ENCODE measurements at regions of chr12 and their contacts with region 1.

Region 1: DNA sequence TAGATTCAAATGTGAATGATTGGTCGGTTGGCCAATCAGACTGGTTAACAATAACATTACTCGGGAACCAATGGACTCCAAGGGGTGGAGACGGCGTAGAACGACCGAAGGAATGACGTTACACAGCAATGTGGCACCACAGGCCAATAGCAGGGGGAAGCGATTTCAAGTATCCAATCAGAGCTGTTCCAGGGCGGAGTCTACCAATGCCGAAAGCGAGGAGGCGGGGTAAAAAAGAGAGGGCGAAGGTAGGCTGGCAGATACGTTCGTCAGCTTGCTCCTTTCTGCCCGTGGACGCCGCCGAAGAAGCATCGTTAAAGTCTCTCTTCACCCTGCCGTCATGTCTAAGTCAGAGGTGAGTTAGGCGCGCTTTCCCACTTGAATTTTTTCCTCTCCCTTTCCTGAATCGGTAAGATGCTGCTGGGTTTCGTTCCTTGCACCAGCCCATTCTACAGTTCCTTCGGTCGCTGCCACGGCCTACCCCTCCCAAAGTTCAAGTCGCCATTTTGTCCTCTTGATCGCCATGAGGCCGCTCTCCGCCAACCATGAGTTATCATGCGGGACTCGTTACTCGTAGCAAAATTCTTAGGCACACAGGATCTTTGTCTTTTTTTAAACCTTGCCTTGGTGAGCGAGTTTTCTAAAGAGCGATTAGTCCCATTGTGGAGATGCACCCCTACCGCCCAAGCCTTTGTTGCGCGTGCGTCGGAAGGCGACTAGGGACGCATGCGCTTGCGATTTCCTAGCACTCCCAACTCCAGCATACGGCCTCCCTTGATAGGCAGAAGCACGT is at the start of gene HNRNPA1:
- DNase-seq: peak; percentile 98
- ATAC-seq: peak; percentile 89
- H3K4me3 Mint-ChIP-seq: no peak within 1 kb of the TSS
- H3K27ac Mint-ChIP-seq: no peak within 1 kb of the TSS
- H3K4me1 Mint-ChIP-seq: peaks cover 55% of the 10 kb centered on the region
- H3K27me3 Mint-ChIP-seq: no peaks in the 10 kb centered on the region
- total RNA-seq, gene HNRNPA1: 1,520 to 1,553 TPM

Region 2: GRCh38 chr12:54240971-54241588 is 39.6 kb before region 1 on chr12:
- CTCF ChIA-PET with region 1: no interaction called
- POLR2A ChIA-PET with region 1: interaction called, 14 read pairs
- DNase-seq: no peak
- ATAC-seq: no peak
- H3K4me3 Mint-ChIP-seq: no peak overlapping the region
- H3K27ac Mint-ChIP-seq: peak overlapping the region; percentile 54
- H3K4me1 Mint-ChIP-seq: peaks cover 17% of the 10 kb centered on the region
- H3K27me3 Mint-ChIP-seq: no peaks in the 10 kb centered on the region

Region 3: GRCh38 chr12:54259194-54260011 is 21.3 kb before region 1 on chr12:
- CTCF ChIA-PET with region 1: no interaction called
- POLR2A ChIA-PET with region 1: interaction called, 10 read pairs
- DNase-seq: peak; percentile 49
- ATAC-seq: peak; percentile 91
- H3K4me3 Mint-ChIP-seq: peak overlapping the region; percentile 28
- H3K27ac Mint-ChIP-seq: no peak overlapping the region
- H3K4me1 Mint-ChIP-seq: peaks cover 26% of the 10 kb centered on the region
- H3K27me3 Mint-ChIP-seq: no peaks in the 10 kb centered on the region

Region 4: DNA sequence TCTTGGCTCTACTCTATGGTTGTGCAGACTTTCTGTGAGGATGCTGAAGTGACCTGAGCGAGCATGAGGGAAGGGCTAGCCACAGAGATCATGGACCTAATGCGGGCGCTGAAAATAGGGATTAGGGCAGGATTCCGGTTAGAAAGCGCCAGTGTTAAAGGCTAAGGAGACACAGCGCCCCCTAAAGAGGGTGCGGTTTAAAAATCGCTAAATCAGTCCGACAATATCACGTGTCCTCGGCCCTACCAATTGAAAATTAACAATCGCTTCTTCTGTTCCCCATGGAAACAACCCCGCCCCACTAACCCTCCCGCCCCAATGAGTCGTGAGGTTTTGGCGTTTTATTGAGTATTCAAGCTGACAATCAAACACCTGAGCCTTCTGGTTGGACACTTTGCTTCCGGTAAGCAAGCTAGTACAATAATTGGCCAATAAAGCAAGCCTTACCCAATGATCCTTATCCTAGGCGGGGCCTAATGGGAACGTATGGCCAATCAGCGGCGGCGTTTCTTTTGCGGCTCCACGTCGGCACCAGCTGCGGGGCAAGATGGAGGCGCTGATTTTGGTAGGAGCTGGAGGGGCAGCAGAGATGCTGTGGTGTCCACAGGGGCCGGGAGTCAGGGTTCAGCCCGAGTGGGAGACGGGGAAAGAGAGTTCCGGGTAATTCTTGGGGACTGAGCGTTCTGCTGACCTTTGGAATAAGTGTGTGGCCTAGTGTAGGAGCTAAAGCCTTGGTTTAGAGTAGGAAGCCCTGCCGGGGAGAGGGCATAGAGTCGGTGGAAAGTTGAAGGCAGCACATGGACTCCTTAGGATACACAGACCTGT is 44.2 kb after region 1 on chr12 and contains the start of gene COPZ1:
- CTCF ChIA-PET with region 1: interaction called, 26 read pairs
- POLR2A ChIA-PET with region 1: interaction called, 24 read pairs
- DNase-seq: peak; percentile 98
- ATAC-seq: peak; percentile 99
- H3K4me3 Mint-ChIP-seq: peak within 1 kb of the TSS; percentile 97
- H3K27ac Mint-ChIP-seq: peak within 1 kb of the TSS; percentile 92
- H3K4me1 Mint-ChIP-seq: peaks cover 38% of the 10 kb centered on the region
- H3K27me3 Mint-ChIP-seq: no peaks in the 10 kb centered on the region
- total RNA-seq, gene COPZ1: 105 to 112 TPM

Region 5: GRCh38 chr12:54497883-54498282 is 217.2 kb after region 1 on chr12:
- CTCF ChIA-PET with region 1: no interaction called
- POLR2A ChIA-PET with region 1: interaction called, 10 read pairs
- DNase-seq: no peak
- ATAC-seq: no peak
- H3K4me3 Mint-ChIP-seq: peak overlapping the region; percentile 96
- H3K27ac Mint-ChIP-seq: peak overlapping the region; percentile 95
- H3K4me1 Mint-ChIP-seq: peaks cover 43% of the 10 kb centered on the region
- H3K27me3 Mint-ChIP-seq: no peaks in the 10 kb centered on the region

Measured in activated CD8-positive, alpha-beta T cell treated with anti-CD3 and anti-CD28 coated beads, Interleukin-2, amount 10 ng/mL, durations not matched to agents 7 days and 5 days (primary cell).